Prostate gland (tissue), 2 donors: ENCODE measurements at regions of chr9 and their contacts with region 1.

Region 1: GRCh38 chr9:101530077-101530711 is 3.5 kb upstream of the RNF20 start:
- DNase-seq: peak; percentile 73
- H3K4me3 ChIP-seq: no peak overlapping the region
- H3K27ac ChIP-seq: no peak overlapping the region
- H3K4me1 ChIP-seq: no peaks in the 10 kb centered on the region
- H3K27me3 ChIP-seq: no peaks in the 10 kb centered on the region
- CTCF ChIP-seq: peak; percentile 48 to 88 (median 86)
- POLR2A ChIP-seq: no peak

Region 2: GRCh38 chr9:101354143-101354764 is 175.9 kb before region 1 on chr9:
- intact Hi-C with region 1: no loop called
- DNase-seq: no peak
- H3K4me3 ChIP-seq: no peak overlapping the region
- H3K27ac ChIP-seq: no peak overlapping the region
- H3K4me1 ChIP-seq: no peaks in the 10 kb centered on the region
- H3K27me3 ChIP-seq: no peaks in the 10 kb centered on the region
- CTCF ChIP-seq: no peak
- POLR2A ChIP-seq: no peak

Region 3: GRCh38 chr9:101398068-101398929 is 131.9 kb before region 1 on chr9 and contains the starts of genes MRPL50 and ZNF189:
- intact Hi-C with region 1: loop called (anchors 5 kb)
- DNase-seq: peak; percentile 99
- H3K4me3 ChIP-seq: peak within 1 kb of the TSS; percentile 73 to 77
- H3K27ac ChIP-seq: peak within 1 kb of the TSS; percentile 85 to 90
- H3K4me1 ChIP-seq: peaks cover 11% of the 10 kb centered on the region
- H3K27me3 ChIP-seq: no peaks in the 10 kb centered on the region
- CTCF ChIP-seq: peak in 1 of 4 experiments; percentile 21
- POLR2A ChIP-seq: peak; percentile 87
- total RNA-seq, gene MRPL50: 10.3 to 12.5 TPM
- total RNA-seq, gene ZNF189: 20.9 to 31.4 TPM

Region 4: DNA sequence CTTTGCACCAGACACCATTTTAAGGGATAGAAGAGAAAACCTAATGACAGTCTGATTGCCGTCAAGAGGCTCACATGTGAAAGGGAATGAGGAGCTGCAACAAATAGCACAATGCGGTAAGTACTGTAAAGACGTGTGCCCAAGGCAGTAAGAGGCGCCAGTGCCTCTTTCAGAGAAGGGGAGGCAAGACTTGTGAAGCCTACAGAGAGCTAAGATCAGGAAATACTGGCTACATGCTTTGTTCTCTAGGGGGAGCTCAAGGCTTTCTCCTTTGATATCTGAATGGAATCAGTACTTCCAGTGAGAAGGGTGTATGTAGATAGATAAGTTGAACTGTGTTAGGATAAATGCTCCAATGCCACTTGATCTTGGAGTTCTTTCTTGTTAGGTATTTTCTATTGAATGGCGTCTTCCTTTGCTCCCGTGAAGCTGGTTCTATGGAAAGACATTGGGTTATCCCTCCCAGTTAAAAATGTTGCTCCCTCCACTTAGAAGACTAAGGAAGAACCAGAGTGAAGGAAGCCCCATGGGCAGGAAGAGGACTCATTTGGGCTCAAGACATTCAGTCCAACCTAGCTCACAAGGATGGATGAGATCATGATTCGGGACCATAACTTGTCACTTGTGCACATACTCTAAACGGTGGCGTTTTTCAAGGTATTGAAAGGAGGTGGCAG is 71.1 kb before region 1 on chr9:
- intact Hi-C with region 1: loop called (anchors 5 kb)
- DNase-seq: peak; percentile 49
- H3K4me3 ChIP-seq: no peak overlapping the region
- H3K27ac ChIP-seq: no peak overlapping the region
- H3K4me1 ChIP-seq: no peaks in the 10 kb centered on the region
- H3K27me3 ChIP-seq: no peaks in the 10 kb centered on the region
- CTCF ChIP-seq: peak in 3 of 4 experiments; percentile 47 to 70 (median 69)
- POLR2A ChIP-seq: no peak